ENCODE measurements at regions of chr1 and their contacts with region 1.

Region 1: DNA sequence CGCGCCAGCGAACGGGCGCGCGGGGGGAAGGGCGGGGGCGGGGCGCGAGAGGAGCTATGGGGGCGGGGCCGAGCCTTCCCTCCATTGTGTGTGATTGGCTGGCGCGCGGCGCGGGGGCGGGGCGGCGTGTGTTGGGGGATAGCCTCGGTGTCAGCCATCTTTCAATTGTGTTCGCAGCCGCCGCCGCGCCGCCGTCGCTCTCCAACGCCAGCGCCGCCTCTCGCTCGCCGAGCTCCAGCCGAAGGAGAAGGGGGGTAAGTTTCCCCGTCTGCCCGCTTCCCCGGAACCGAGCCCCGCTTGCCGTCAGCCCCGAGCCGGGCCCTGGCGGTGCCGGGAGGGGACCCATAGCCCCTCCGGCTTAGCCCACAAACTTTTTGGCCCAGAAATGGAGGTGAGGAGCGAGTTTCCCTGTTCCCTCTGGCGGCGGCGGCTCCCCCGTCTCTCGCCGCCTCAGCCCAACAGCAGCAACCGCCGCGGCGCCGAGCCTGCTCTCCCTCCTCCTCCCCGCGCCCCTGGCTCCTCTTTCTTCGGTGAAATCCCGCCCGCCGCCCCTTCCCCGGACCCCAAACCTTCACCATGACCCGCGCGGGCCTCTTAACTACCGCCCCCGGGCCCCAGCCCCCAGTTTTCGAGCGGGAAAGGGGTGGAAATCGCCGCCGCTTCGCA is at the start of gene H3-3A:
- DNase-seq: peak; percentile 94 to 96 (median 94)
- H3K4me3 ChIP-seq: peak within 1 kb of the TSS; percentile 89 to 98 (median 90)
- H3K4me3 Mint-ChIP-seq: peak within 1 kb of the TSS; percentile 100
- H3K27ac ChIP-seq: peak within 1 kb of the TSS; percentile 92 to 99
- H3K27ac Mint-ChIP-seq: peak within 1 kb of the TSS; percentile 98 to 100 (median 99)
- H3K4me1 ChIP-seq: peaks cover 34 to 49% of the 10 kb centered on the region in 2 donors
- H3K4me1 Mint-ChIP-seq: peaks cover 43% of the 10 kb centered on the region
- H3K27me3 ChIP-seq: no peaks in the 10 kb centered on the region
- H3K27me3 Mint-ChIP-seq: no peaks in the 10 kb centered on the region
- CTCF ChIP-seq: no peak
- polyA plus RNA-seq, gene H3-3A: 961 to 1,826 (median 1,812) TPM

Region 2: GRCh38 chr1:225881969-225882693 is 180.6 kb before region 1 on chr1 and contains the start of gene TMEM63A:
- intact Hi-C with region 1: no loop called
- DNase-seq: peak; percentile 76 to 82 (median 78)
- H3K4me3 ChIP-seq: peak within 1 kb of the TSS; percentile 84 to 100 (median 94)
- H3K4me3 Mint-ChIP-seq: peak within 1 kb of the TSS; percentile 97
- H3K27ac ChIP-seq: peak within 1 kb of the TSS; percentile 67 to 93
- H3K27ac Mint-ChIP-seq: peak within 1 kb of the TSS; percentile 57 to 95 (median 89)
- H3K4me1 ChIP-seq: peaks cover 33 to 40% of the 10 kb centered on the region in 2 donors
- H3K4me1 Mint-ChIP-seq: peaks cover 52% of the 10 kb centered on the region
- H3K27me3 ChIP-seq: peaks cover 0 to 5% of the 10 kb centered on the region in 2 donors
- H3K27me3 Mint-ChIP-seq: peaks cover 8 to 12% (median 11%) of the 10 kb centered on the region in 3 donors
- CTCF ChIP-seq: peak; percentile 40
- polyA plus RNA-seq, gene TMEM63A: 3.0 to 48.0 (median 5.8) TPM

Region 3: GRCh38 chr1:225999227-225999911 is 63.3 kb before region 1 on chr1 and contains the start of gene SDE2:
- intact Hi-C with region 1: loop called (anchors 1 to 2 kb)
- DNase-seq: peak; percentile 99 to 100 (median 99)
- H3K4me3 ChIP-seq: peak within 1 kb of the TSS; percentile 69 to 95 (median 87)
- H3K4me3 Mint-ChIP-seq: peak within 1 kb of the TSS; percentile 100
- H3K27ac ChIP-seq: peak within 1 kb of the TSS; percentile 97 to 98
- H3K27ac Mint-ChIP-seq: peak within 1 kb of the TSS; percentile 99 to 100 (median 100)
- H3K4me1 ChIP-seq: peaks cover 48 to 62% of the 10 kb centered on the region in 2 donors
- H3K4me1 Mint-ChIP-seq: peaks cover 69% of the 10 kb centered on the region
- H3K27me3 ChIP-seq: no peaks in the 10 kb centered on the region
- H3K27me3 Mint-ChIP-seq: peaks cover 0 to 5% (median 2%) of the 10 kb centered on the region in 3 donors
- CTCF ChIP-seq: no peak
- polyA plus RNA-seq, gene SDE2: 6.8 to 18.0 (median 8.4) TPM

Region 4: DNA sequence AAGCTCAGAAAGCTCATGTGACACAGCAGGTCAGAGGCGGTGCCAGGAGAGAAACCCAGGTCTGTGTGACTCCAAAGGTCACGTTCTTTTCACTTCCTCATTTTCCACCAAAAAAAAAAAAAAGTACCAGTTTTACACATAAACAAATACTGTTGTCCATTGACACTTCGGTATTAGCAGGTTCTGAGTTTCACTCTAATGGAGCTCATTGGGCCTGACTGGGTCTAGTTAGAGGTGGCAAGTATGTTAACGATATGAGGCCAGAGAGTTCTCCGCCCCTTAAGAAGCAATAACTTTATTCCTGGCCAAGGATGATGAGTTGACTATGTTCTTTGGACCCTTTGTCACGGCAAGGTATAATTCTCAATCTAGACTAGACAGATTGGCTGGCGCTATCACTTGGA is 33.6 kb before region 1 on chr1:
- intact Hi-C with region 1: loop called (anchors 5 kb)
- DNase-seq: peak; percentile 83 to 98 (median 94)
- H3K4me3 ChIP-seq: peak overlapping the region in 1 of 3 experiments; percentile 32
- H3K4me3 Mint-ChIP-seq: peak overlapping the region in 1 of 2 donors; percentile 59
- H3K27ac ChIP-seq: peak overlapping the region; percentile 76 to 93
- H3K27ac Mint-ChIP-seq: peak overlapping the region; percentile 93 to 96 (median 95)
- H3K4me1 ChIP-seq: peaks cover 63 to 69% of the 10 kb centered on the region in 2 donors
- H3K4me1 Mint-ChIP-seq: peaks cover 65% of the 10 kb centered on the region
- H3K27me3 ChIP-seq: no peaks in the 10 kb centered on the region
- H3K27me3 Mint-ChIP-seq: peaks cover 0 to 5% (median 5%) of the 10 kb centered on the region in 3 donors
- CTCF ChIP-seq: no peak

Region 5: DNA sequence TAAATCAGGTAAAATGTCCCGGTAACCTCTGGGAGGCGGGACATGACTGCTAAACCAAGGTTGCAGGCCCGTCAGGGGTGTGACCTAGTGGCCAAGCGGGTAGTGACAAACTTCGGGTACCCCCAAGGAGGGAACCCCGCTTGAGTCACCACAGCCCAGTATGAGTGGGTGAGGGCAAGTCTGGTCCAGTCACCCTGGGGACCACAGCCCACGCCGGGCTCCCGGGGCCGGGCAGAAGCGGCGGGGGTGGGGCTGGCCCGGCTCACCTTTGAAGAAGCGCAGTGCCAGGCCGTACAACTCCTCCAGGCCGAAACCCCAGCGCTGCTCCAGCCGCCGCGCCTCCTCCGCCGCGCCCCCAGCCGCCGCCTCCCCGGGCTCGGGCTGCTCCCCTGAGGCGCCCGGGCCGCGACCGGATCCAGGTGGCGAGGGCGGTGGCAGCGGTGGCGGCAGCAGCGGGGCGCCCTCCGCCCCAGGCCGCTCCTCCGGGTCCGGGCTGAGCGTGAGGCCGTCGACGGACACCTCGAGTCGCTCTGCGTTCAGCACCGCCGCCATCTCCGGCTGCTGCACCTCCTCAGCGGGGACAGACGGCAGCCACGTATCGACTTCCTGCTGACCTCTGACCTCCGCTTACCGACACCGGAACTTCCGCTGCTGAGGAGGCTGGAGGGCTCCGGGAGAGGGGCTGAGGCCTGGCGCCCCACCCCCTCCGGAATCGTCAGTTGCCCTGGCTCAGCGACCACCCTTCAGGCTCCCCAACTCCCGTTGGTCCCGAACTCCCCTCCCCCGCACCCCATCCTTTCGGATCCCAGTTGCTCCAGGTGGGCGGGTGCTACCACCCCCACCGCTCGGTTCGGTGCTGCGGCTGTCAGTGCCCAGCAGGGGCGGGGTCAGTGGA is 123.7 kb after region 1 on chr1 and contains the start of gene ACBD3:
- intact Hi-C with region 1: loop called in 1 of 2 experiments (anchors 10 kb)
- DNase-seq: peak; percentile 81 to 97 (median 82)
- H3K4me3 ChIP-seq: peak within 1 kb of the TSS; percentile 85 to 89 (median 88)
- H3K4me3 Mint-ChIP-seq: peak within 1 kb of the TSS; percentile 85 to 90
- H3K27ac ChIP-seq: peak within 1 kb of the TSS; percentile 72 to 91
- H3K27ac Mint-ChIP-seq: peak within 1 kb of the TSS; percentile 88 to 97 (median 95)
- H3K4me1 ChIP-seq: peaks cover 36 to 41% of the 10 kb centered on the region in 2 donors
- H3K4me1 Mint-ChIP-seq: peaks cover 36% of the 10 kb centered on the region
- H3K27me3 ChIP-seq: no peaks in the 10 kb centered on the region
- H3K27me3 Mint-ChIP-seq: peaks cover 0 to 3% (median 0%) of the 10 kb centered on the region in 3 donors
- CTCF ChIP-seq: no peak
- polyA plus RNA-seq, gene ACBD3: 7.0 to 16.3 (median 11.4) TPM

Measured in CD14-positive monocyte (primary cell).